Right ventricle myocardium inferior (tissue), 1 donor: ENCODE measurements at regions of chr16 and their contacts with region 1.

Region 1: GRCh38 chr16:56702836-56703235 is 20.6 kb downstream of the MT1X start:
- DNase-seq: no peak
- ATAC-seq: no peak

Region 2: DNA sequence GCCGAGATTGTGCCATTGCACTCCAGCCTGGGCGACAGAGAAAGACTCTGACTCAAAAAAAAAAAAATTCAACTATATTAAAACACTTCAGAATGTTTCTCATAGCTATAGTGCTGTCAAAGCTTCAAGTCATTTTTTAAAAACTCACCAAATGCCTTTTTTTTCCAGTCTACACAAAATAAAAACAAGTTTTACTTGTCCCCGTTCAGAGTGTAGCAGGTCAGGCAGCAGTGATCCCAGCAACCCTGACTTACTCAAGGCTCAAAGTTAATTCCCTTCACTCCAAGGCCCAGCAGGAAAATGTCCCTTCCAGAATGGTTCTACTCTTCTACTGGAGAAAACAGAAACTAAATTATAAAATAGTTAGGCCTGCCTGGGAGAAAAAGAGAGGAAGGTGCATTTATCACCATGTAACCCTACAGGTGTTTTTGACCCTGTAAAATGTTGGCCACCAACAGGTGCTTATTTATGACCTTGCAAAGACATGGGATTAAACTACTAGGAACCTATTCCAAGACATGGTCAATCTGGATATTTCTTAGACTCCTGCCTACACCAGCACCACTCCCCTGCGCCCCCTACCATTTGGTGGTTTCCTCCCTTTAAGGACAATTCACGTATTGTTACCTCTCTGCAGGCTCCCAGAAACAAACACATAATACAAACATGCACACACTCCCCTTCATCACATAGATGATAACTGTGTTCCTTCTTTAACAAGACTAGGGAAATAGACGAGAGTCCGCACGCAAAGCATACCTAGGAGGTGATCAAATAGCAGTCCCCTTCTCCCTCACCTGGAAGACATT is 282.9 kb before region 1 on chr16:
- intact Hi-C with region 1: no loop called
- DNase-seq: no peak
- ATAC-seq: no peak

Region 3: GRCh38 chr16:56513972-56514371 is 188.9 kb before region 1 on chr16:
- intact Hi-C with region 1: loop called (anchors 1 kb)
- DNase-seq: no peak
- ATAC-seq: peak; percentile 57

Region 4: DNA sequence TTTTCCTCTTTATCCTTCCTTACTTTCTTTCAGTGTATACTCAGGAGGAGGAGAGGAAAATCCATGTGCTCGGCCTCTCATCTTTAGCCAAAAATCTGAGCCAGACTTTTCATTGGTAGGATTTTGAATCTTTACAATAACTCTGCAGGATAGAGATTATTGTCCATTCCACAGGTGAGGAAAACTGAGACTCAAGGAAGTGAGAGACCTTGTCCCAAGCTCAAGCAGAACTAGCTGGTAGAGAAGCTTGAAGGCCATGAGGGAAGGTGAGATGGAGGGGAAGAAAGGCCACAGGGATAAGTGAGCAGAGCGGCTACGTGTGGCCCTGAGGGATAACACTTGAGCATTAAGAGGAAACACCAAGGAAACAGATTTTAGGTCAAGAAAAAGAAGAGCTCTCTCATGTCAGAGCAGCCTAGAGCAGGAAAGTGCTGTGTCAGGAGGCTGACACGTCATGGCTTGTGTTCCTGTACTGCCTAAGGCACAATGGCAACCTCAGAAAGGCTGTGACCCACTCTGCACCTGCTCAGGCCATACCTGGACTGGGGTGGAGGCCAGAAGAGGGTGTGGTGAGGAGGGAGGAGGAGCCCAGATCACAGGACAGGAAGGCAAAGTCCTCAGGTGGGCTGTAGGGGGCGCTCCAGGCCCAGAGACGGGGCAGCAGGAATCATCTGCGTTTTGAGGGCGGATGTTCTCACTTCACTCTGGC is 126.1 kb before region 1 on chr16:
- intact Hi-C with region 1: loop called (anchors 1 kb)
- DNase-seq: peak; percentile 83
- ATAC-seq: peak; percentile 80

Region 5: GRCh38 chr16:56600398-56600999 is 102.3 kb before region 1 on chr16:
- intact Hi-C with region 1: loop called (anchors 1 kb)
- DNase-seq: no peak
- ATAC-seq: no peak

Region 6: GRCh38 chr16:56617177-56618085 is 85.4 kb before region 1 on chr16:
- intact Hi-C with region 1: no loop called
- DNase-seq: peak; percentile 90
- ATAC-seq: peak; percentile 94

Region 7: GRCh38 chr16:56673921-56674320 is 28.9 kb before region 1 on chr16:
- intact Hi-C with region 1: loop called (anchors 1 kb)
- DNase-seq: no peak
- ATAC-seq: peak; percentile 47

Region 8: DNA sequence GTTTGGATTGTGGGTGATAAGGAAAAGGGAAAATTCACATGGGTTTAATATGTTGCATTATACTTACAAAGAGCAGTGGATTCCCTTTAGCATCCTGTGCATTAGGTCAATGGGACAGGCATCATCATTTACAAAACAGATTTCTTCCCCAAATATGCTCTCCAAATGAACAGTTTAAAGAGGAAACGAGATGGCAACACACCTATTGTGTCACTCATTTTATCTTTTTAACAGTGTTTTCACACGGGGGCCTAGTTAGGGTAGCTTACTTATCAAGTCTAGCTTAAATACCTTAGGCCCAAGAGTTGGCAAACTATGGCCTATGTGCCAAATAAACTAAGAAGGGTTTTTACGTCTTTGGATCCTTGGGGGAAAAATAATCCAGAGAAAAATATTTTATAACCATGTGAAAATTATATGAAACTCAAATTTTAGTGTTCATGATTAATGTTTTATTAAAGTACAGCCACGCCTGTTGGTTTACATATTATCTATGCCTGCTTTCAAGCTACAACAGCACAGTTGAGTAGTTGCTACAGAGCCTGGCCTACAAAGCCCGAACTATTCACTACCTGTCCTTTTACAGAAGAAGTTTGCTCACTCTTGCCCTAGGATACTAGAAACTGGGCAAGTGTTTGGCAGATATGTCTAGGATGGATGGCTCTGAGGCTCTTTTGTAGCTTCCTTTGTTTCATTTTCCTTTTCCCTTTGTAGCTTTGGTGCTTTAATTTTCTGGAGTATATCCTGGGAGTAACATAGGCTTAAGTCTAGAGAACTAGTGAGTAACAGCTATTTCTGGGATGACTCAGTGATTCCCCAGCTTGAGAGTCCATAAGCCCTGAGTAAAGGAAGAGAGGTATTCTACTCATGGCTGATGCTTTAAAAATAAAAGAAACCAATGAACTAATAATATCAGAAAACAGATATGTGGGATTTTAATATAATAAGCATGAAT is 39.5 kb after region 1 on chr16:
- intact Hi-C with region 1: no loop called
- DNase-seq: no peak
- ATAC-seq: no peak